ENCODE measurements at regions of chr19 and their contacts with region 1.

Region 1: DNA sequence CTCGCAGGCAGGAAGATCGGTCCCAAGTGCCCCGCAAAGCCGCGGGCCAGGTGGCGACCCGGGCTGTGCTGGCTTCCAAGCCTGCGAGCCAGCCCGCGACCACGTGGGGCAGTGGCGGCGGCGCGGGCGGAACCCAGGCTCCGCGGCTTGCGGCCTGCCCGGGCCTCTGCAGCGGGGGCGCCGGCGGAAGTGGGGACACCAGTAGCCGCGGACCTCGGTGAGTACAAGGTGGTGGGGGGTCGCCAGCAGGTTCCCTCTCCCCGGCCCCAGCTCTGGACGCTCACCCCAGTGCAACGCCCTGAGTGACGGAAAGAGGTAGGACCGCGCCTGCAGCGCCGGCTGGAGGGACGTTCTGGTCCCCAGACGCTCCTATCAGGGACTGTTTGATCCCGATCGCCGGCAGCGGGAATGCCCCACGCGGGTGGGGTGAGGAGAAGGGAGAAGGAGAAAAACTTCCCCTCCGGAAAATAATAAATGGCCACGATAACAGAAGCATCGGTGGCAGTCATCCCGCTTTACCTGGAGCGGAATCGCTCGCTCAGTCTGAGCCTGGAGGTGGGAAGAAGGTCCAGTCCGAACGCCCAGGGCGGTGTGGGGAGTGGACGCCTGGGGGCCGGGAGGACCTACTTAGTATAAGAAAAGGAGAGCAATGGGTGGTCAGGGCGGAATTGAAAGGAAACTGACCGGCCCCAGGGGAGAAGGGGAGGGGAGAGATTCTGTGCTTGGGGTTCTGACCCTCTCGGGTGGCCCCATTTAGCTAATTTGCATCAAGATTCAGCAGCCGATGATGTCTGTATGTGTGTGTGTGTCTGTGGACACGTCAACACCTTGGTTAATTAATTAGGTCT is at the start of gene GEMIN7:
- DNase-seq: peak; percentile 60
- ATAC-seq: peak; percentile 74
- H3K4me3 ChIP-seq: peak within 1 kb of the TSS; percentile 87 to 95 (median 93)
- H3K27ac ChIP-seq: peak within 1 kb of the TSS; percentile 77
- H3K4me1 ChIP-seq: peaks cover 51% of the 10 kb centered on the region
- H3K27me3 ChIP-seq: no peaks in the 10 kb centered on the region; a peak in 1 of 5 replicates
- CTCF ChIP-seq: peak; percentile 22; the same call in 1 of the 2 replicates
- EP300 ChIP-seq: peak in 1 of 2 experiments; percentile 55; a peak in 1 of 4 replicates
- POLR2A ChIP-seq: peak; percentile 62 to 82; a peak in 3 of 4 replicates
- RAD21 ChIP-seq: peak; percentile 81
- total RNA-seq, gene GEMIN7: 30.6 and 42.0 TPM in 2 replicates

Region 2: DNA sequence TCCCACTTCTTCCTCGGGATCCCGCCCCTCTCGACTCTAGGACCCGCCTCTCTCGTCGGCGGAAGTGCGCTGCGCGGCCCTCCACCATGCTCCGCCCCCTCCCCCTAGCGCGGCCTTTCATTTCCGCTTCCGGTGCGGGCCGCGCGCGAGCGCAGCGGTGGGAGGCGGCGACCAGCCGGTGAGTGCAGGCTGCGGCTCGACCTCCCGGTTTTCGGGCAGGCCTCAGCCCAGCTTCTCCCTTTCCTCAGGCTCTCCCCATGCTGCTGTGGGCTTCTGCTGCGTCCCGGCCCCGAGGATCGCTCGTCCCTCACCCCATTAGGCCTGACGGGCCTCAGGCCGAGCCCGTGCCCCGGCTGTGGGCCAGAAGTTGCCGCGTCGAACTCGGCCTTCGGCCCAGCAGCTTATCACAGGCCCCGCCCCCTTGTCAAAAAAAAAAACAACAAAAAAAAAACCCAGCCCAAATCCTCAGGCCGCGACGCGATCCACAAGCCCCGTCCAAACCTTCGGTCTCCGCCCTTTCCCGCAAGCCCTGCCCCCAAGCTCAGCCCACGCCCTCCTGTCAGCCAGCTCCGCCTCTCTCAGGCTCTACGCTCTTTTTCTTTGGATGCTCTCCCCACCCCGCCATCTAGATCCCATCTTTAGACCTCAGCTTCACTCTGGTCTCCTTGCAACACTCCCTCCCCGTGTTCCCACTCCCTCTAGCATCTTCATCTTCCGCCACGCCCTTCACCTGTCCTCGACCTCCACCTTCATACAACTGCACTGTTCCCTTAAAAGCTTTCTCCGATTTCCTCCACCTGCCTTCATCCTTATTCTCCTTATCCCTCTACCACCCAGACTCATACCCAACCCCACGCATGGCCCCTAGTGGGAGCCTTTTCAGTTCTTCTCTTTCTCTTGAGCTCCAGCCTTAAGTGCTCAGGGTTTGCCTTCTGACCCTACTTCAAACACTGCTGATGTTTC is 40.1 kb before region 1 on chr19 and contains the start of gene CLASRP:
- CTCF ChIA-PET with region 1: no interaction called
- POLR2A ChIA-PET with region 1: interaction called, 12 read pairs
- in situ Hi-C with region 1: no loop called
- intact Hi-C with region 1: no loop called
- DNase-seq: peak; percentile 71
- ATAC-seq: peak; percentile 97
- H3K4me3 ChIP-seq: peak within 1 kb of the TSS; percentile 94 to 100 (median 95)
- H3K27ac ChIP-seq: peak within 1 kb of the TSS; percentile 91
- H3K4me1 ChIP-seq: peaks cover 48% of the 10 kb centered on the region
- H3K27me3 ChIP-seq: no peaks in the 10 kb centered on the region; a peak in 1 of 5 replicates
- CTCF ChIP-seq: no peak
- EP300 ChIP-seq: no peak
- POLR2A ChIP-seq: peak; percentile 78 to 91
- RAD21 ChIP-seq: no peak
- total RNA-seq, gene CLASRP: 7.4 and 32.0 TPM in 2 replicates

Region 3: GRCh38 chr19:45103156-45103507 is 23.8 kb after region 1 on chr19:
- CTCF ChIA-PET with region 1: no interaction called
- POLR2A ChIA-PET with region 1: interaction called, 13 read pairs
- in situ Hi-C with region 1: no loop called
- intact Hi-C with region 1: no loop called
- DNase-seq: no peak
- ATAC-seq: peak; percentile 1; the same call in 2 of the 3 replicates
- H3K4me3 ChIP-seq: peak overlapping the region; percentile 51 to 65 (median 55); a peak in 5 of 6 replicates
- H3K27ac ChIP-seq: peak overlapping the region; percentile 75
- H3K4me1 ChIP-seq: peaks cover 77% of the 10 kb centered on the region
- H3K27me3 ChIP-seq: no peaks in the 10 kb centered on the region
- CTCF ChIP-seq: no peak
- EP300 ChIP-seq: no peak
- POLR2A ChIP-seq: no peak
- RAD21 ChIP-seq: no peak

Region 4: DNA sequence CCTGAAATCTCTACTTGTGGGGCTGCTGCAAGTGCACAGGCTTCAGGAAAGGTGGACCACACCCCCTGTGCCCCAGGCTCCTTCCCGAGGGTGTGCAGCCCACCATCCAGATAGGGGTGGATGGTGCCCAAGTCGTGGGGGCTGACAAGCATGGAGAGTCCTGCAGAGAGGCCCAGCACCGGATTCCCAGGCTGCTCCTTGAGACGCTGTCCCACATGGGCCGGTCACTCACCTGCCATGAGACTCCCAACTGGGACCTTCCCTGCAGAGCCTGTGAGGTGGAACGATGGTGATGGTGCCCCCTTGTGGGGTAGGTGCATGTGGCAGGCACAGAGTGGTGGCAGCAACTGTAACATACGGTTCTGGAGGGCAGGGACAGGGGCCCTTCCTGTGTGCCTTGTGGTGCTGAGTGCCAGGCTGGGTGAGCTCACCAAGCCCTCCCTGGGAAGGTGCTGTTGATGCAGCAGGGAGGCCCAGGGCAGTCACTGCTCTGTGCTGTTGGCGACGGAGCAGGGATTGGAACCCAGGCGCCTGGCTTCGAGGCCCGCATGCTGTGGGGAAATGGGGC is 46.7 kb after region 1 on chr19:
- CTCF ChIA-PET with region 1: no interaction called
- POLR2A ChIA-PET with region 1: interaction called, 3 read pairs
- in situ Hi-C with region 1: no loop called
- intact Hi-C with region 1: loop called (anchors 5 kb)
- DNase-seq: peak; percentile 65
- ATAC-seq: peak; percentile 84
- H3K4me3 ChIP-seq: no peak overlapping the region
- H3K27ac ChIP-seq: no peak overlapping the region
- H3K4me1 ChIP-seq: peaks cover 30% of the 10 kb centered on the region
- H3K27me3 ChIP-seq: no peaks in the 10 kb centered on the region
- CTCF ChIP-seq: peak; percentile 96
- EP300 ChIP-seq: no peak
- POLR2A ChIP-seq: no peak
- RAD21 ChIP-seq: peak; percentile 87

Region 5: DNA sequence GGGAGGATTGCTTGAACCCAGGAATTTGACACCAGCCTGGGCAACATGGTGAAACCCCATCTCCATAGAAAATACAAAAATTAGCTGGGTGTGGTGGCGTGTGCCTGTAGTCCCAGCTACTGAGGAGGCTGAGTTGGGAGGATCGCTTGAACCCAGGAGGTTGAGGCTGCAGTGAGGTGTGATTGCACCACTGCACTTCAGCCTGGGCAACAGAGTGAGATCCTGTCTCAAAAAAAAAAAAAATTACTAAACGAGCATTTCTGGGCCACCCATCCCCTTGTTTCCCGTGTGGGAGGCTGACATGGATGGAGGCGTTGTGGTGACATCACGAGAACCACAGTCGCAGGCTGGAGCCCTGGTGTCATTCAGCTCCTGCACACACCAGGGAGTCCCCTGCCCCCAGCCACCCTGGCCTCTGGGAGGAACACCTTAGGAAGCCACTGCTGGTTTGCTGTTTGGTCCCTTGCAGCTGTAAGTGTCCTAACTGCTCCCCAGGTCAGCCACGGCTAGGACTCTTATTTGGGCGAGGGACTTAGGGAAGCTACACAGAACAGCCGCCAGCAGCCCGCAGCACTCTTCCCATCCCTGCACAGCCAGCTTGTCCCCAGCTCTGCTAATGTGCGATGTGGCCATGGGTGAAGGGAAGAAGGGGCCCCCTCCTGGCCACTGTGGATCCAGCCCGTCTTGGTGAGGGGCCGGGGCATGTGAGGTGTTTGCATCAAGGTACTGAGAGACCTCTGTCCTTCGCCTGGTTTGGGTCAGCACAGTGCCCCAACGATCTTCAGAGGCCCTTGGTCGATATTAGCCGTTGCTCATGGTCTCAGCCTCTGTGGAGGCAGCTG is 68.8 kb after region 1 on chr19:
- CTCF ChIA-PET with region 1: no interaction called
- POLR2A ChIA-PET with region 1: no interaction called
- in situ Hi-C with region 1: no loop called
- intact Hi-C with region 1: no loop called
- DNase-seq: no peak
- ATAC-seq: peak; percentile 28
- H3K4me3 ChIP-seq: no peak overlapping the region
- H3K27ac ChIP-seq: no peak overlapping the region
- H3K4me1 ChIP-seq: peaks cover 17% of the 10 kb centered on the region
- H3K27me3 ChIP-seq: no peaks in the 10 kb centered on the region
- CTCF ChIP-seq: peak; percentile 50
- EP300 ChIP-seq: no peak
- POLR2A ChIP-seq: no peak
- RAD21 ChIP-seq: no peak

Measured in HepG2 (cell line).